Activated CD4-positive, alpha-beta T cell treated with anti-CD3 and anti-CD28 coated beads for 36 hours (primary cell): ENCODE measurements at regions of chr1 and their contacts with region 1.

Region 1: GRCh38 chr1:109282952-109283747 is at the start of gene PSRC1:
- DNase-seq: peak; percentile 95
- ATAC-seq: peak; percentile 98
- H3K4me3 Mint-ChIP-seq: peak within 1 kb of the TSS; percentile 86
- H3K27ac Mint-ChIP-seq: peak within 1 kb of the TSS; percentile 90
- H3K4me1 Mint-ChIP-seq: peaks cover 11% of the 10 kb centered on the region
- H3K27me3 Mint-ChIP-seq: no peaks in the 10 kb centered on the region
- total RNA-seq, gene PSRC1: 17.6 to 18.4 TPM

Region 2: GRCh38 chr1:109248797-109249642 is 34.1 kb before region 1 on chr1 and contains the start of gene CELSR2:
- CTCF ChIA-PET with region 1: interaction called, 4 read pairs
- POLR2A ChIA-PET with region 1: no interaction called
- intact Hi-C with region 1: loop called in 1 of 2 experiments (anchors 1 kb)
- DNase-seq: peak; percentile 80
- ATAC-seq: peak; percentile 89
- H3K4me3 Mint-ChIP-seq: peak within 1 kb of the TSS; percentile 47
- H3K27ac Mint-ChIP-seq: no peak within 1 kb of the TSS
- H3K4me1 Mint-ChIP-seq: peaks cover 4% of the 10 kb centered on the region
- H3K27me3 Mint-ChIP-seq: peaks cover 4% of the 10 kb centered on the region
- total RNA-seq, gene CELSR2: 1.9 to 2.0 TPM

Region 3: DNA sequence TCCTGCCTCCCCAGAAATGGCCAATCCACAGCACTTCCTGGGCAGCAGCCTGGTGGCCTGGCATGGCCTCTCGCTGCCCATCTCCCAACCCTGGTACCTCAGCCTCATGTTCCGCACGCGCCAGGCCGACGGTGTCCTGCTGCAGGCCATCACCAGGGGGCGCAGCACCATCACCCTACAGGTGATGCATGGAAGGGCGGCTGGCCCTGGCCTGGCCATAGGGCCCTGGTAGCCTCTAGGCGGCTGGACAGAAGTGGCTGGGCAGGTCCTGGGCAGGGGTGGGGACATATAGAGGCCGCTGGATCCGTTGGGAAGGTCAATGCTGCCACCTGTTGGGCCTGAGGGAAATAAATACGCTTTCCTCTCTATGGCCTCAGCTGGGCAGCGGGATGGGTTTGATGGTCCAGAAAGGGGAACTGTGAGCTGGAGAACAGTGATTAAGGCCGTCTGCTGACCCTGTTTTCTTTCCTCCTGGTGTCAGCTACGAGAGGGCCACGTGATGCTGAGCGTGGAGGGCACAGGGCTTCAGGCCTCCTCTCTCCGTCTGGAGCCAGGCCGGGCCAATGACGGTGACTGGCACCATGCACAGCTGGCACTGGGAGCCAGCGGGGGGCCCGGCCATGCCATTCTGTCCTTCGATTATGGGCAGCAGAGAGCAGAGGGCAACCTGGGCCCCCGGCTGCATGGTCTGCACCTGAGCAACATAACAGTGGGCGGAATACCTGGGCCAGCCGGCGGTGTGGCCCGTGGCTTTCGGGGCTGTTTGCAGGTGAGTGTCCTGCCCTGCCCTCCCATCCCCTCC is 19.4 kb before region 1 on chr1:
- CTCF ChIA-PET with region 1: interaction called, 15 read pairs
- POLR2A ChIA-PET with region 1: no interaction called
- intact Hi-C with region 1: loop called in 1 of 2 experiments (anchors 1 kb)
- DNase-seq: peak; percentile 92
- ATAC-seq: peak; percentile 98
- H3K4me3 Mint-ChIP-seq: no peak overlapping the region
- H3K27ac Mint-ChIP-seq: peak overlapping the region; percentile 89
- H3K4me1 Mint-ChIP-seq: no peaks in the 10 kb centered on the region
- H3K27me3 Mint-ChIP-seq: no peaks in the 10 kb centered on the region

Region 4: DNA sequence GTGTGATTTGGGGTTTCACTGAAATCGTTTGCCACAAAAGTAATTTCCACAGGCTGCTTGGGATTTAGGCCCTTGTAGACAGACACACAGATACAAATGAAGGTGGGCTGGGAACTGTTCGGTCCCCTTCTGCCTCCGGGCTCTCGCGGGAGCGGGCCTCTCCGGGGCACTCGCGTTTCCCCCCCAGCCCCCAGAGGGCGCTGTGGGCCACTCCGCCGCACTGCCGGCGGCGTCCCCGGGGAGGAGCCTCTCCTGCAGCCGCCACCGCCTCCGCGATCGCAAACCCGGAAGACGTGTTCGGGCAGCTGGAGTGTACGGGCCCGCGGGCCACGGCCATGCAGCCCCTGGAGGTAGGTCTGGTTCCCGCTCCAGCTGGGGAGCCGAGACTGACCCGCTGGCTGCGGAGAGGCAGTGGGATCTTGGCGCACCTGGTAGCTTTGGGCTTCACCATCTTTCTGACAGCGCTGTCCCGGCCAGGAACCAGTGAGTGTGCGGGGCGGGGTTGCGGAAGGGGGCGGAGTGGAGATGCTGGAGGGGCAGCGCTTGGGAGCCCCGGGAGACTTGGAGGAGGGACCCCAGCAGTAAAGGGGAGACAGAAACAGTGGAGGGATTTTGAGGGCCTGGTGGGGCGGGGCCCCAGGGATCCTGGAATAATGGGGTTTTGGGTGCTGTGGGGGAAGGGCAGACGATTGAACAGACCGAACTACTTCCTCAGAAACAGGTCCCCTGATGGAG is 210.8 kb after region 1 on chr1 and contains the start of gene CYB561D1:
- CTCF ChIA-PET with region 1: interaction called, 3 read pairs
- POLR2A ChIA-PET with region 1: no interaction called
- intact Hi-C with region 1: loop called (anchors 1 to 5 kb)
- DNase-seq: peak; percentile 95
- ATAC-seq: peak; percentile 89
- H3K4me3 Mint-ChIP-seq: peak within 1 kb of the TSS; percentile 98
- H3K27ac Mint-ChIP-seq: peak within 1 kb of the TSS; percentile 90
- H3K4me1 Mint-ChIP-seq: peaks cover 45% of the 10 kb centered on the region
- H3K27me3 Mint-ChIP-seq: no peaks in the 10 kb centered on the region
- total RNA-seq, gene CYB561D1: 7.1 to 8.7 TPM